CD4-positive, alpha-beta T cell (primary cell): ENCODE measurements at regions of chr9 and their contacts with region 1.

Region 1: DNA sequence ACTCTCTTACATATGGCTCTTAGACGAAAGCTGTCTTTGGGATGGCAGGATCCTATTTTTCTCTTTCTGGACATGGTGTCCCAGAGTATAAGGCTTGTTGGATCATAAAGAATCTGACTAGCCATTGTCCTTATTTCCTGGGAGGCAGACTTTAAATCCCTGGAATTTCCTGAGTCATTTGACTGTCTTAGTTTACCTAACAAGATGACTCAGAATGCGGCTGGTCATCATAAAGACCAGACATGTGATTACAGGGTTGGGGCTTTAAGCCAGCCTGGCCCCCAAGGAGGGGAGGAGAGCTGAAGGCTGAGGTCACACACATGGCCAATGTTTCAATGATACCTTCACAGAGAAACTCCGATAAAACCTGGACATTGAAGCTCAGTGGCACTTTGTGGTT is 37.2 kb downstream of the FAM240B start:
- DNase-seq: no peak
- ATAC-seq: no peak
- H3K4me3 ChIP-seq: no peak overlapping the region
- H3K4me3 Mint-ChIP-seq: no peak overlapping the region
- H3K27ac ChIP-seq: no peak overlapping the region
- H3K27ac Mint-ChIP-seq: no peak overlapping the region
- H3K4me1 ChIP-seq: no peaks in the 10 kb centered on the region
- H3K4me1 Mint-ChIP-seq: no peaks in the 10 kb centered on the region
- H3K27me3 ChIP-seq: no peaks in the 10 kb centered on the region
- H3K27me3 Mint-ChIP-seq: peaks cover 21% of the 10 kb centered on the region
- CTCF ChIP-seq: no peak

Region 2: GRCh38 chr9:38641985-38642864 is 40.5 kb before region 1 on chr9:
- CTCF ChIA-PET with region 1: no interaction called
- POLR2A ChIA-PET with region 1: no interaction called
- intact Hi-C with region 1: no loop called
- DNase-seq: peak in 3 of 14 experiments; percentile 9 to 15 (median 13)
- ATAC-seq: no peak
- H3K4me3 ChIP-seq: no peak overlapping the region
- H3K4me3 Mint-ChIP-seq: no peak overlapping the region
- H3K27ac ChIP-seq: no peak overlapping the region
- H3K27ac Mint-ChIP-seq: no peak overlapping the region
- H3K4me1 ChIP-seq: no peaks in the 10 kb centered on the region
- H3K4me1 Mint-ChIP-seq: no peaks in the 10 kb centered on the region
- H3K27me3 ChIP-seq: peaks cover 0 to 4% of the 10 kb centered on the region in 2 experiments
- H3K27me3 Mint-ChIP-seq: peaks cover 20% of the 10 kb centered on the region
- CTCF ChIP-seq: peak; percentile 41

Region 3: DNA sequence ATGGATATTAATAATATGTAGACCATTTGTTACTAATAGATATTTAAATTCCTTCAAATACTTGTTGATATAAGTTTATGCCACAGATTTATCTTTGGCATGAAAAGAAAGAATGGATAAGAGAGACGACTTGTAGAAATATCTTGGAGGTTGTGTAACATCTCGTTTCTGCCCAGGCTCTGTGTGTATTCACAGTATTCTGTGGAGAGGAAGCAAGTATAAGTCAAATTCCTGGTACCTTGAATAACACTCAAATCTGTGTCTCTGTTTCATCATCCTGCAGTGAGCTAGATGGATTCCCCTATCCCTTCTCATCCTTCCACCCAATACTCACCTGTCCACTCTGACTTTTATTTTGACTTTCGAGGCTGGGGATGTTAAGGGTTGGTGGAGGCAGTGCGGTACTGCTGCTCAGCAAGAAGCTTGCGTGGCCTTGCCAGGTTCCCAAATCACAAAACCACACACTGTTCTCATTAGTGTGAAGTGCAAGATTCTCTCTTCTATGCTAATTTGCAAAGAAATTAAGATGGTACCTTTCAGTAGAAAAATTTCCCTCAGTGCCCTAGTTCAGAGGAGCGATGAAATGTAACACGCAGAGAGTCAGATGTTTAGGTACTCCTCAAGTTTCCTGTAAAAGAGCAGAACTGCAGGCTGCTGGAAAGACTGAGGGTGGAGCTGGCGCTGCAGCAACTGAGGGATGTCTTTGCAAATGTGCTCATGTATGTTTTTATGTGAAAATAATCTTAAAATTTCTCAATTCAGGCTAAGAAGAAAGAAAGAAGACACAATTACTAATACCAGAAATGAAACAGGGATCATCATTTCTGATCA is 19.7 kb before region 1 on chr9:
- CTCF ChIA-PET with region 1: no interaction called
- POLR2A ChIA-PET with region 1: no interaction called
- intact Hi-C with region 1: loop called in 1 of 2 experiments (anchors 2 kb)
- DNase-seq: no peak
- ATAC-seq: no peak
- H3K4me3 ChIP-seq: no peak overlapping the region
- H3K4me3 Mint-ChIP-seq: no peak overlapping the region
- H3K27ac ChIP-seq: no peak overlapping the region
- H3K27ac Mint-ChIP-seq: no peak overlapping the region
- H3K4me1 ChIP-seq: no peaks in the 10 kb centered on the region
- H3K4me1 Mint-ChIP-seq: no peaks in the 10 kb centered on the region
- H3K27me3 ChIP-seq: peaks cover 0 to 1% of the 10 kb centered on the region in 2 experiments
- H3K27me3 Mint-ChIP-seq: peaks cover 26% of the 10 kb centered on the region
- CTCF ChIP-seq: no peak